HEK293T (cell line): ENCODE measurements at regions of chr14 and their contacts with region 1.

Region 1: GRCh38 chr14:24188251-24189058 is at the start of gene IPO4:
- DNase-seq: peak; percentile 98

Region 2: DNA sequence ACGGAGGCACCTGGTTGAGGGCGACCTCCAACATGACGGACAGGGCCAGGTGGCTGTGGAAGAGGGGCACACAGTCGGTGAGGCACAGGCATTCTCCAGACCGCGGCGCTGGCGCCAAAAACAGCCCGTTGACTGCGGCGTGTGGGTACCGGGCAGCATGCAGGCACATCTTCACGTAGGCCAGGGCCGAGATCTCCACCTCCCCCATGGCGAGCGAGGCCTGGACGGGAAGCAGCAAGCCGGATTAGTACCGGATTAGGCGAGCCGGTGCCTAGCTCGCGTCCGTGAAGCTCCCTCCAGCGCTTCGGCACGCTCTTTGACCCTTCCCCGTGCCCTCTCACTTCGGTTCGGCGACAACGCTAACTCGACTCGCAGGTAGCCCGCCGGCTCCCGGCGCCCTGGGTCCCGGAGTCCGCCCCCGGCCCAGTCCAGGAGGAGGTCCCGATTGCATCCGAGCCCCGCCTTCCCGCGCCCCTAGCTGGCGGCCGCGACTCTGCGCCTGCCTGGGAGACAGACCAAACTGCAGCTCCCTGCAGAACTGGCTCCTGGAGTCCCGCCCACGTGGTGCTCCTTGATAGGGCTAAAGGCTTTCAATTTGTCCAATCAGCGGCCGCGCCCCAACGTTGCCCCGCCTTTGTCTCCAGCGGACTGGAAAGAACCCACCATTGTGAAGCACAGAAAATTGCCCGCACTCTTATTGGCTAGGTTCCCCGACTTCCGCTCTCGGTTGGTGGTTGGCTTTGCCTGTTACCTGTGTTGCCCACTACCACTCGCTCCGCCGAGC is 47.2 kb before region 1 on chr14 and contains the start of gene EMC9:
- CTCF ChIA-PET with region 1: no interaction called
- POLR2A ChIA-PET with region 1: interaction called, 10 read pairs
- DNase-seq: peak; percentile 91

Region 3: DNA sequence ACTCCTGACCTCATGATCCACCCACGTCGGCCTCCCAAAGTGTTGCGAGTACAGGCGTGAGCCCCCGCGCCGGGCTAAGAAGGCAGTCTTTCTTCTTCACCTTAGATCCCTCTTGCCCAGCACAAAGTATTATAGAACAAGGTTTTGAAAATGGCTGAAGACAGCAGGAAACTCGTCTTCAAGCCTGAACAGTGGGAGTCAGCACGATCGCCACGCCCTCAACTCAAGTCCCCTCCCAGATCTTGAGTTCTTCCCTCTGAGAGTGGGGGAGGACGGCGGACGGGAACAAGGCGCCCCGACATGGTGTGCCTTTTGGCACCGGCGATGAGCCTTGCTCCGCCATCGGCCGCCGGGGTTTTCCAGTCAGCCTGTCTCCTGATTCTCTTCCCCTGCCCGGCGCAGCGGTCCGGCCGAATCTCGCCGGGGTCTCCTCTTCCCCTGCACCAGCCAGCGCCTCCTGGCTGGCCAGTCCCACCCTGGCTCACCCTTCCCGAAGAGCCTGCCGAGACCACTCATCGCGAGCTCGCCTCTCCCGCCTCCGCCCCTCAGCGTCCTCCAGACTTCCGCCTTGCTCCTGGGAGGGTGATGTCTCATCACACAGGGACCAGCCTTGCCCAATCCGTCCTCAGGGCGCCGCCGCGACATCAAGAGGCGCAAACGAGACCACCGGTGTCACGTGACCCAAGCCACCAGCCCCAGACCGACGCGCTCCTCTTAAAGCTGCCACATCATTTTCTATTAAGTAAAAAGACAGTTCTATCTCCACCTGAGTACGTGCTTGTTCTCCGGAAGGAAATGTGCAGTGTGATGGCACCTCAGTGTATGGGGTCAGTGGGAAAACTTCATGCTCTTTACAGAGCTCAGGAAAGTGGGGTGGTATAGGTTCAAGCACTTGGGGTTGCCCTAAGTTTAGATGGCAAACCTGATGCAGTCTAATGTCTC is 24.7 kb after region 1 on chr14 and contains the start of gene CHMP4A:
- CTCF ChIA-PET with region 1: interaction called, 5 read pairs
- POLR2A ChIA-PET with region 1: interaction called, 20 read pairs
- DNase-seq: peak; percentile 96